Activated CD4-positive, alpha-beta T cell treated with anti-CD3 and anti-CD28 coated beads, Interleukin-2, amount 10 ng/mL, durations not matched to agents 24 days and 14 days (primary cell): ENCODE measurements at regions of chr4 and their contacts with region 1.

Region 1: GRCh38 chr4:1346781-1347409 is at the start of gene UVSSA:
- DNase-seq: peak; percentile 100
- H3K4me3 Mint-ChIP-seq: peak within 1 kb of the TSS; percentile 98
- H3K27ac Mint-ChIP-seq: peak within 1 kb of the TSS; percentile 94
- H3K4me1 Mint-ChIP-seq: peaks cover 35% of the 10 kb centered on the region
- H3K27me3 Mint-ChIP-seq: no peaks in the 10 kb centered on the region
- total RNA-seq, gene UVSSA: 28.3 and 28.4 TPM in 2 replicates

Region 2: DNA sequence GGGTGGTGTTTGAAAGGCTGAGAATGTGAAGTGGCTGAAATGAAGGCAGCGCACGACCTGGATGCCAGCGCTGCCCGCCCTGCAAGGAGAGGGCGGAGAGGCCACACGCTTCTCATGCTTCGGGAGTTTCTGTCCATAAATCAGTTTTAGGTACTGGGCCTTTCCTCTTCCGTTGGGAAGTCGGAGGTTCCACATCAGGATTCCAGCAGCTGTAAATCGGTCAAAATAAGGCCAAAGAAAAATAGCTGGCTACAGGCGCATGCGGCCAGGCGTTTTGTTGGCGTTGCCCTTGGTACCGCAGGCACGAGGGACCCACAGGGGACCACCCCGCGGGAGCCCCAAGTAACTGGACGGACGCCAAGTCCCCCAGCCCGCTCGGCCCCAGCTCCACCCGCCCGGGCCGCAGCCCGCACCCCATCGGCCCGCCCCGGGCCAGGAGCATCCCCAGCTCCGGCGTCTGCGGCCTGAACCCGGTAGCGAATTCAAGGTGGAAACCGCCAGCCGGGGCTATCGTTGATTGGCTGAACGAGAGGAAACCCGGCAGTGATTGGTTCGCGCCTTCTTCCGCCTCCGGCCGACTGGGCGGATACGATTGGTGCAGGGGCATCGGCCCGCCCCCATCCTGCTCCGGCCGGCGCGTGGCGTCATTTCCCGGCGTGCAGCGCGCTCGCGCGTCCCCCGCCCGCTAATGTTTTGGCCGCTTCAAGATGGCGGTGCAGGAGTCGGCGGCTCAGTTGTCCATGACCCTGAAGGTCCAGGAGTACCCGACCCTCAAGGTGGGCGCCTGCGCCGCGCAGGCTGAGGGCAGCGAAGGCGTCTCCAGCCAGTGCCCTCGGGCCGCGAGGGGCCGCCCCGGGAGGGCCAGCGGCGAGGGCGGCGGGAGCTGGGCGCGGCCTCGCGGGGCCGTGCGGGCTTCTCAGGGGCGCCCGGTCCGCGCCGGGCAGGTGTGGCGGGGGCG is 57.4 kb before region 1 on chr4 and contains the start of gene MAEA:
- intact Hi-C with region 1: loop called (anchors 1 kb)
- DNase-seq: peak; percentile 99
- H3K4me3 Mint-ChIP-seq: peak within 1 kb of the TSS; percentile 95
- H3K27ac Mint-ChIP-seq: peak within 1 kb of the TSS; percentile 90
- H3K4me1 Mint-ChIP-seq: peaks cover 26% of the 10 kb centered on the region
- H3K27me3 Mint-ChIP-seq: no peaks in the 10 kb centered on the region
- total RNA-seq, gene MAEA: 61.3 and 62.6 TPM in 2 replicates

Region 3: DNA sequence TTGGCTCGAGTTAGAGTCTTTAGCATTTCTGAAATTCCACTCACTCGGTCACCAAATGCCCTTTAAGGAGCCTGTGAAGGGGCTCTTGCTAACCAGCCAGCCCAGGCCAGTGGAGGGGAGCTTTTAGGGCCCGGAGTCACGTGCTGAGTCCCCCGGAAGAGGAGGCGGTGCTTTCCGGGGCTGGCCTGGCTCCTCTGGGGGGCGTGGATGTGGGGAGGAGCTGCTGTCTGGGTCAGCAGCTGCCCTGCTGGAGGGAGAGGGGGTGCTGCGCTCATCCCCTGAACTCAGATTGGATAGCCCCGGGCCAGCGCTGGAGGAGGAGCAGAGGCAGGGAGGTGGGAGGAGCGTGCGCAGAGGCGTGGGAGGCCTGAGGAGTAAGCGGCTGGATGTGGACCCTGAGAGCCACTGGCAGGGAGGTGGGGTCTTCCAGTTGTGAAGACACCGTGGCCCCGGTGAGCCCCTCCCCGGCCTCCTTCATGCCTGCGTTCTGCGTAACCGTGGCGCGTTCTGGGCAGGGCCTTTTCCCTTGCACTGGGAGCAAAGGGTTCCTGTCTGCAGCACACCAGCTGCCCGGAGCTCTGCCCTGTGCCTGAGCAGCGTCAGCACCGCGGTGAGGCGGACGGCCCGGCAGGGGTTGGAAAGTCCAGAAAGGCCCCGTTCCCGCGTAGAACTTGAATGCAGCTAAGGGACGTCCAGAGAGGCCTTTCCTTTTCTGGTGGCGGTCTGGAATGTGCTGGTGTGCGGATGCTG is 37.5 kb before region 1 on chr4:
- intact Hi-C with region 1: loop called (anchors 5 kb)
- DNase-seq: peak; percentile 88
- H3K4me3 Mint-ChIP-seq: peak overlapping the region; percentile 78
- H3K27ac Mint-ChIP-seq: peak overlapping the region; percentile 57
- H3K4me1 Mint-ChIP-seq: peaks cover 51% of the 10 kb centered on the region
- H3K27me3 Mint-ChIP-seq: no peaks in the 10 kb centered on the region

Region 4: DNA sequence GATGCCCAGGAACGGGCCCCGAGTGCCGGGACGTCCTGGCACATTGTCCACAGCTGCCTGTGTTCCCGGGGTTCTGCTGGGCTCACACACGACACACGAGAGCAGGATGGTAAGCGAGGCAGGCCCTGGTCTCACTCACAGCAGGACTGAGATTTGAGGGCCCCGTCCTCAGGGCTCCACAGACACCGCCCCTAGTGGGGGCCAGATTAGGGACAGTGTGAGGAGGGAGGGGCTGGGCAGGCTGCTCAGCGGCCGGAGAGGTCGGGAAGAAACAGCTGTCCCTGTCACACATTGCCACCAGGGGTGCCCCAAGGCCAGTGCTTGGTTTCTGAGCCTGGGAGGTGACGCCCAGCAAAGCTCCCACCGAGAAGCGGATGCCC is 30.3 kb after region 1 on chr4:
- intact Hi-C with region 1: no loop called
- DNase-seq: no peak
- H3K4me3 Mint-ChIP-seq: no peak overlapping the region
- H3K27ac Mint-ChIP-seq: no peak overlapping the region
- H3K4me1 Mint-ChIP-seq: no peaks in the 10 kb centered on the region
- H3K27me3 Mint-ChIP-seq: no peaks in the 10 kb centered on the region

Region 5: GRCh38 chr4:1410491-1411325 is 63.8 kb after region 1 on chr4:
- intact Hi-C with region 1: no loop called
- DNase-seq: peak; percentile 83
- H3K4me3 Mint-ChIP-seq: no peak overlapping the region
- H3K27ac Mint-ChIP-seq: no peak overlapping the region
- H3K4me1 Mint-ChIP-seq: peaks cover 4% of the 10 kb centered on the region
- H3K27me3 Mint-ChIP-seq: peaks cover 23% of the 10 kb centered on the region